Cardiac septum (tissue), 1 donor: ENCODE measurements at regions of chr11 and their contacts with region 1.

Region 1: DNA sequence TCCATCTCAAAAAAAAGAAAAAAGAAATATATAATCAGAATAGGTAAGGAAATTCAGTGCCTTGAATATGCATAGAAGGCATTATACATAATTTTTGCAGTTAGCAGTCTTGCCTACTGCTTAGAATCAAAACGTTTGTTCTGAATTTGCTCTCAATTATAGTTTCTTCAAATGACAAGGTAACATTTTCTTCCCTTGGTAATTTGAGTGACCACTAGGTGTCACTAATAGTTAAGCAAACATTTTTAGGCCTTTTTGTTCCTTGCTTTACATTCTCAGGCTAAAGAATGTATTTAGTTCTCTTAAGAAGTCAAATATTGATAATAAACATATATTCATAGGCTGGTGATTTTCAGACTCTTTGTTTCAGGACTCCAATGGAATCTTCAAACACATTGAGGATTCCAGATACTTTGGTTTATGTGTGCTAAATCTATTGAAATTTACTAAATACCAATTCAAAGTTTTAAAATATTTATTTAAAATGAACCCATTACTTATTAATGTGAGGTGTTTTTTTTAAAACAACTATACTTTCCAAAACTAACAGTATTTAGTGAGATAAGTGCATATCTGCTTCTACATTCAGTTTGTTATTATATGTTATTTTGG is 55.0 kb upstream of the DEPDC7 start:
- DNase-seq: no peak

Region 2: GRCh38 chr11:33005175-33005574 is 44.5 kb after region 1 on chr11:
- intact Hi-C with region 1: no loop called
- DNase-seq: no peak

Region 3: DNA sequence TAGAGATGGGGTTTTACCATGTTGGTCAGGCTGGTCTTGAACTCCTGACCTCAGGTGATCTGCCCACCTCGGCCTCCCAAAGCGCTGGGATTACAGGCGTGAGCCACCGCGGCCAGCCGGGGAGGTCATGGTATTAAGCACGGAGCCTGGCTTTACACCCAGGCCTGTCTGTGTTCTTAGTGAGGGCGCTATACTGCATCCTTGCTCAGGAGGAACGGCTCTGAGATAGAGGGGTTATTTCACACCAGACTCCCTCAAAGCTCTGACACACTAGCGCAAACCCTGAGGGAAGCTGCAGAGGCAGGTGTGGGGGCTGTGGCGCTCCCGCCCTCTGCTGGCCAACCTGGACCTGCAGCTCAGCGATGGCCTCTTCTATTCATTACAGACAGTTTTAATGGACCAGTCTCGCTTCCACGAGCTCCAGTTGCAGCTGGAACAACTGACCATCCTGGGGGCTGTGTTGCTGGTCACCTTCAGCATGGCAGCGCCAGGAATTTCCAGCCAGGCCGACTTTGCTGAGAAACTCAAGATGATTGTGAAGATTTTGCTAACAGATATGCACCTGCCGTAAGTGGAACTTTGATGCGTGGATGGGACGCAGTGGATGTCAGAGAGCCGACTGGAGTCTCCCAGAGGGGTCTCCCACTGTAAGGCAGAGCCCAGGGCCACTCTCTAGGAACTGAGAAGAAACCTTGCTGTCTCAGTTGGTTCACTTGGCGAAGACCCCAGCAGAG is 105.0 kb after region 1 on chr11:
- intact Hi-C with region 1: loop called (anchors 5 kb)
- DNase-seq: peak; percentile 84